CD4-positive, alpha-beta memory T cell (primary cell): ENCODE measurements at regions of chr19 and their contacts with region 1.

Region 1: DNA sequence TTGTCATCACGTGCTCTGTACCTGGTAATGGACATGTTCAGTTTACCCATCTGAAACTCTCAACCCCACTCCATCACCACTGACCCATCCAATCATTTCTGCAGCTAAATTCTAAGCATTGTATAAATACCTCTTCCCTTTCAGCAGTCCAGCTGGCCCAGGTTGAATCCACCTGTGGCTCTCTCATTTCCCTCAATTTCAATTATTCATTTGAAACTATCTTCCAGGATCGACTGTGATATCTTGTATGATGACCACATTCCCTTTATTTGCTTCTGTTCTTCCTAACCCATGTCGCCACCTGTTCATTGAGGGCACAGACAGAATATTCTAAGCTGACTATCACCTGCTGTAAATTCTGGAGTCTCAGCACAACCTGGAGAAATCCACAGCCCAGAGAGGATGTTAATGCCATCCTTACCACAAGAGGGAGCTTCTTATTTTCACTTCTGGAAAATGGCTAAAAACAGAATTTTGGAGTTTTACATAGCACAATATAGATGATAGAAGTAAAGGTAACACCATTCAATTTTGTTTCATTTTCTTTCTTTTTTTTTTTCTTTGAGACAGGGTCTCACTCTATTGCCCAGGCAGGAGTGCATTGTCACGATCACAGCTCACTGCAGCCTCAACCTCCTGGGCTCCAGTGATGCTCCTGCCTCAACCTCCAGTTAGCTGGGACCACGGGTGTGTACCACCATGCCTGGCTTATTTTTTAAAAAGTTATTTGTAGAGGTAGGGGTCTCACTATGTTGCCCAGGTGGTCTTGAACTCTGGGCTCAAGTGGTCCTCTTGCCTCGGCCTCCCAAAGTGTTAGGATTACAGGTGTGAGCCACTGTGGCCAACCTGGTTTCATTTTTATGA is 38.6 kb downstream of the ZNF823 start:
- DNase-seq: peak in 4 of 5 donors; percentile 14 to 22 (median 17)
- H3K4me3 ChIP-seq: no peak overlapping the region
- H3K4me3 Mint-ChIP-seq: no peak overlapping the region
- H3K27ac ChIP-seq: no peak overlapping the region
- H3K27ac Mint-ChIP-seq: no peak overlapping the region
- H3K4me1 ChIP-seq: peaks cover 2% of the 10 kb centered on the region
- H3K4me1 Mint-ChIP-seq: peaks cover under 1 to 3% (median 2%) of the 10 kb centered on the region in 4 donors
- H3K27me3 ChIP-seq: no peaks in the 10 kb centered on the region
- H3K27me3 Mint-ChIP-seq: peaks cover 14 to 16% of the 10 kb centered on the region in 2 donors

Region 2: DNA sequence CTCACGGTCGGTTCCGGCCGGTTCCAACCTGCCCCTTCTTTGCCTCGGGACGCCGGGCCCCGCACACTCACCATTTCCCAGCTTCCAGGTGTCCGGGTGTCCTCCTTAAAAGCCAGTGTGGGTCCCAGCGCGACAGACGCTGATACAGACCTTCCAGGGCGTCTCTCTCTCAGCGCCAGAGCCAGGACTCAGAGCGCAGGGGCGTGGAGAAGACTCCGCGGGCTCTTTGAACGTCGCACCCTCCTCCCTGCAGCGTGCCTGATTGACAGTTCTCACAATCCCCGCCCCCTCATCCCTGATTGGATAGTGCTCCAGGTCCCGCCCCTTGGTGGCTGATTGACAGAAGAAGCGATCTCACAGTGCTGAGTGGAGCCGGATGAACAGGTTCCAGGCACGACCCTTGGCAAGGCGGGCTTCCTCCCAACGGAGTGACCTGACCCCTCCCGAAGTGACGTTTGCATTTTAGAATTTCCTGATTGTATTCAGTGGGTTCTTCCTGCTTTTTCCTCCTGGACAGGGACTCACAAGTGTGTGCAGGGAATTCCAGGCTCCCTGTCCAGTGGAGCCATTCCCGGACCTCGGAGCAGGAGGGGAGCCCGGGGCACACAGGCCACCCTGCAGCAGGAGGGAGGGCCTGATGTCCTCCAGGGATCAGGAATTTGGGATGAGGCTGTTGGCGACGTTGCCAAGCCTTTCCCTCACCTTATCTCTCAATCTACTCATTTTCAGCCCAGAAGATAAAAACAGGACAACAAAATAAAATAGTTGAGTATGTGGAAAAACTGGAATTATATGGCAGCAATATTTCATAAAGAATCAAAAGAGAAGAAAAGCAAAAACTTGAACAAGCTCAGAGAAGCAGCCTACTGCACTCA is 38.8 kb after region 1 on chr19 and contains the start of gene ZNF823:
- CTCF ChIA-PET with region 1: interaction called, 3 read pairs
- POLR2A ChIA-PET with region 1: no interaction called
- intact Hi-C with region 1: loop called (anchors 1 kb)
- DNase-seq: peak; percentile 94 to 97 (median 95)
- H3K4me3 ChIP-seq: peak within 1 kb of the TSS; percentile 45 to 80
- H3K4me3 Mint-ChIP-seq: peak within 1 kb of the TSS; percentile 96 to 100 (median 99)
- H3K27ac ChIP-seq: peak within 1 kb of the TSS; percentile 63
- H3K27ac Mint-ChIP-seq: peak within 1 kb of the TSS; percentile 77 to 99 (median 97)
- H3K4me1 ChIP-seq: peaks cover 15% of the 10 kb centered on the region
- H3K4me1 Mint-ChIP-seq: peaks cover 15 to 30% (median 17%) of the 10 kb centered on the region in 4 donors
- H3K27me3 ChIP-seq: no peaks in the 10 kb centered on the region
- H3K27me3 Mint-ChIP-seq: no peaks in the 10 kb centered on the region
- total RNA-seq, gene ZNF823: 4.6 to 5.4 TPM

Region 3: DNA sequence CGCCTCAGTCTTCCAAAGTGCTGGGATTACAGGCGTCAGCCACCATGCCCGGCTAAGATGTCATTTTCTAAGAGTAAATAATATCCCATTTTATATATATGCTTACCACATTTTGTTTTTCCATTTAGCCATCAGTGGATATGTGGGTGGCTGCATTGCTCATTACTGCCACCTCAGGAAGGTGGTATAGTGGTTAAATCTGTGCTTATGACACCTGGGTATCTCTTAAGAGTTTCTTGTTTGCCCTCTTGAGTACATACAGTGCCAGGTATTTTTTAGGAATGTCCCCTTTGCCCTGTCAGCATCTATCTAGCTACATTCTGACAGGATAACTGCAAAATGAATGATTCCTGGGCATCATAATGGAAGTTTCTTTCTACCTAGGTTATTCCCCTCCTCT is 202.1 kb after region 1 on chr19:
- CTCF ChIA-PET with region 1: no interaction called
- POLR2A ChIA-PET with region 1: no interaction called
- intact Hi-C with region 1: no loop called
- DNase-seq: no peak
- H3K4me3 ChIP-seq: no peak overlapping the region
- H3K4me3 Mint-ChIP-seq: no peak overlapping the region
- H3K27ac ChIP-seq: no peak overlapping the region
- H3K27ac Mint-ChIP-seq: no peak overlapping the region
- H3K4me1 ChIP-seq: no peaks in the 10 kb centered on the region
- H3K4me1 Mint-ChIP-seq: peaks cover 0 to 1% (median 0%) of the 10 kb centered on the region in 4 donors
- H3K27me3 ChIP-seq: no peaks in the 10 kb centered on the region
- H3K27me3 Mint-ChIP-seq: no peaks in the 10 kb centered on the region